ENCODE measurements at regions of chr19 and their contacts with region 1.

Region 1: GRCh38 chr19:12453491-12453890 is 12.7 kb upstream of the ZNF443 start:
- DNase-seq: peak in 1 of 2 donors; percentile 33
- H3K4me3 ChIP-seq: no peak overlapping the region
- H3K27ac ChIP-seq: peak overlapping the region in 1 of 2 donors; percentile 19
- H3K4me1 ChIP-seq: no peaks in the 10 kb centered on the region
- H3K27me3 ChIP-seq: no peaks in the 10 kb centered on the region
- CTCF ChIP-seq: no peak
- POLR2A ChIP-seq: no peak

Region 2: GRCh38 chr19:12411893-12412292 is 41.6 kb before region 1 on chr19:
- intact Hi-C with region 1: no loop called
- DNase-seq: no peak
- H3K4me3 ChIP-seq: no peak overlapping the region
- H3K27ac ChIP-seq: no peak overlapping the region
- H3K4me1 ChIP-seq: no peaks in the 10 kb centered on the region
- H3K27me3 ChIP-seq: no peaks in the 10 kb centered on the region
- CTCF ChIP-seq: no peak
- POLR2A ChIP-seq: no peak

Region 3: DNA sequence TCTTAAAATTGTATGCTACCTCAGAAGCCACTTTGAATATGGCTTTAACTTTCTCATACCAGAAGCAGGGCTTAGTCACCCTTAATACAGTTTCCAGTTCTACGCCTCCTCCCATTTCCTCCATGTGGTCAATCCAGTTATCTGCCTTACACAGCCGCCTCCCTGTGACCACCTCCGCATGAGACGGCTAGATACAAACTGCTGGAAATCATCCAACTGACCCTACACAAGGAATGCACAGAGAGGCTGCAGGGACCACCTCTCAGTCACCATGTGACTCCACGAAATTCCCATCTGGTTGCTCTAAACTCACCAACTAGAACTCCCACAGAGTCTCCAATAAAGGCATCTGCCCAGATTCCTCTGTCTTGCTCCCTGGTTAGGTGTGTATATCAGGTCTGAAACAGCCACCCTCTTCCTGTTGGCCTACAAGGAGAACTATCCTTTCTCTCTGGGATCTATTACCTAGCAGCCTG is 90.9 kb after region 1 on chr19:
- intact Hi-C with region 1: loop called (anchors 5 kb)
- DNase-seq: no peak
- H3K4me3 ChIP-seq: no peak overlapping the region
- H3K27ac ChIP-seq: peak overlapping the region; percentile 25
- H3K4me1 ChIP-seq: peaks cover 0 to 6% of the 10 kb centered on the region in 2 donors
- H3K27me3 ChIP-seq: no peaks in the 10 kb centered on the region
- CTCF ChIP-seq: no peak
- POLR2A ChIP-seq: no peak

Region 4: GRCh38 chr19:12681074-12681951 is 227.8 kb after region 1 on chr19 and contains the start of gene DHPS:
- intact Hi-C with region 1: no loop called
- DNase-seq: peak; percentile 86 to 90
- H3K4me3 ChIP-seq: peak within 1 kb of the TSS; percentile 75 to 94 (median 87)
- H3K27ac ChIP-seq: peak within 1 kb of the TSS; percentile 98 to 99
- H3K4me1 ChIP-seq: no peaks in the 10 kb centered on the region
- H3K27me3 ChIP-seq: no peaks in the 10 kb centered on the region
- CTCF ChIP-seq: no peak
- POLR2A ChIP-seq: peak; percentile 45
- total RNA-seq, gene DHPS: 86.6 to 117 (median 91.4) TPM